ENCODE measurements at regions of chr19 and their contacts with region 1.

Region 1: DNA sequence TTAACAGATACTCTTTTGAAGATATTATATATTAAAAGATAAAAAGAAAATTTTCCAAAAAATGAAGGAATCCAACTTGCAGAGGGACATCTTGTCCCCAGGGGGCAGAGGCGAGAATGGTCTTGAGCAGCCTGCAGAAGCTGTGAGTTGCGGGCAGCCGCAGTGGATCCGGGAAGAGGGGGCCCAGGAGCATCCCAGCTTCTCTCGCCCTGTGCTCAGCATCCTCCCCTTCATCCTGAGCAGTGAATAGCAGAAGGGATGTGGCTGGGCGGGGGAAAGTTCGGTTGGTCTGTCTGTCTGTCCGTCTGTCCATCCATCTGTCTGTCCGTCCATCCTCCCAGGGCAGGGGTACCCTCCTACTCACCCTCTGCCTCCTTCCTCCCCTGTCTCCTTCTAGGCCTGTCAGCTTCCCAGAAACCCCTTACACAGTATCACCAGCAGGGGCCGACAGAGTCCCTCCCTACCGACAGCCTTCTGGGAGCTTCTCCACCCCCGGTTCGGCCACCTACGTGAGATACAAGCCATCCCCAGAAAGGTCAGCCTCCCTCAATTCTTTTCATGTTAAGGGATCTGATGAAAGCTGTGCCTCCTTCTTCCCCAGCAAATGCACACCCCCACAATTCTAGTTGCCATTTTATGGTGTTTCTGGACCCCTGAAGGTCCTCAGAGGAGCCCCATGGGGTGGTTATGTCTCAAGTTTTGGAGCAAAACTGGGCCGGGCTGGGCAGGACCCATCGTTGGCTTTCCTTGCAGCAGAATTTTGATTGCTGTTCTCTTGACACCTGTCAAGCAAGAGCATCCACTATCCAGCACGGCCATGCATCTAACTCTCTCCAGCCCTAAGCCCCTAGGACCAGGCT is 81.6 kb downstream of the DPF1 start:
- DNase-seq: peak; percentile 37
- H3K4me3 ChIP-seq: no peak overlapping the region
- H3K27ac ChIP-seq: no peak overlapping the region
- H3K4me1 ChIP-seq: no peaks in the 10 kb centered on the region
- H3K27me3 ChIP-seq: no peaks in the 10 kb centered on the region
- CTCF ChIP-seq: peak; percentile 81 to 84
- POLR2A ChIP-seq: no peak

Region 2: GRCh38 chr19:38122402-38123093 is 19.9 kb before region 1 on chr19:
- CTCF ChIA-PET with region 1: interaction called, 13 read pairs
- POLR2A ChIA-PET with region 1: no interaction called
- dilution Hi-C with region 1: no loop called
- intact Hi-C with region 1: no loop called
- DNase-seq: no peak
- H3K4me3 ChIP-seq: no peak overlapping the region
- H3K27ac ChIP-seq: no peak overlapping the region
- H3K4me1 ChIP-seq: no peaks in the 10 kb centered on the region
- H3K27me3 ChIP-seq: no peaks in the 10 kb centered on the region
- CTCF ChIP-seq: no peak
- POLR2A ChIP-seq: no peak

Region 3: DNA sequence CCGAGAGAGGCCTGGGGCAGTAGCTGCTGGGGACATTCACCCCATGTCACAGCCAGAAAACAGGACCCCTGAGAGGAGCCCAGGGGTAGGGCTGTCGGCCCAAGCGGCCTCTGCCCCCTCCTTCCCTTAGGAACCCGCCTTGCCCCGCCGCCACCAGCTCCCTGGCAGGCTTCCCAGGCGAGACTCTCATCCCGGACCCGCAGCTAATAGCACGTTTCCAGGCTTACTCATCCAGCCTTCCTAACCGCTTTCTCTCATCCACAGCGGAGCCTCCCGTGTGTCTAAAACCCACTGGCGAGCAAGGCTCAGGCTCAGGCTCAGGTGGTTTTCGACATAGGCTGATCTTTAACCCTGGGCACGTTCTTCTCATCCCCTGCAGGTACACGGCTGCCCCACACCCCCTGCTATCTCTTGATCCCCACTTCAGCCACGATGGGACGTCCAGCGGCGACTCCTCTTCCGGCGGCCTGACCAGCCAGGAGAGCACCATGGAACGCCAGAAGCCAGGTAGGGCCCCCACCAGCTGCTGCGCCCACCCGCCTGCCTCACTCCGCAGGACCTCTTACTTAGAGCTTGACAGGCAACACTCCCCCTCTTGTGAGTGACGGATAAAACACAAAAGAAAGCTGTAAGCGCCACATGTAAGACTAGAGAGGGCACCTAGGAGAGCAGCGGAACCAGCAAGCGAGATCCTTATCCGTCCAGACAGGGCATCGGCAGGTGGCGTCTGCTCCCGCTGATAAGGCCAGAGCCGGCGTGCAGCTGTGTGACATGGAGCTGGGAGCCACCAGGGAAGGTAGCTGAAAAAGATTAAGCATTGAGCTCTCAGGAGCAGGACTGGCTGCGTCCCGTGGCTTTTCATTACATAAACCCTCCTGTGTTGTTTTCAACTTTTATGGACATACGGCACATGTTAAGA is 10.3 kb after region 1 on chr19:
- CTCF ChIA-PET with region 1: interaction called, 15 read pairs
- POLR2A ChIA-PET with region 1: interaction called, 4 read pairs
- dilution Hi-C with region 1: no loop called
- intact Hi-C with region 1: no loop called
- DNase-seq: no peak
- H3K4me3 ChIP-seq: no peak overlapping the region
- H3K27ac ChIP-seq: no peak overlapping the region
- H3K4me1 ChIP-seq: no peaks in the 10 kb centered on the region
- H3K27me3 ChIP-seq: no peaks in the 10 kb centered on the region
- CTCF ChIP-seq: no peak
- POLR2A ChIP-seq: no peak

Region 4: DNA sequence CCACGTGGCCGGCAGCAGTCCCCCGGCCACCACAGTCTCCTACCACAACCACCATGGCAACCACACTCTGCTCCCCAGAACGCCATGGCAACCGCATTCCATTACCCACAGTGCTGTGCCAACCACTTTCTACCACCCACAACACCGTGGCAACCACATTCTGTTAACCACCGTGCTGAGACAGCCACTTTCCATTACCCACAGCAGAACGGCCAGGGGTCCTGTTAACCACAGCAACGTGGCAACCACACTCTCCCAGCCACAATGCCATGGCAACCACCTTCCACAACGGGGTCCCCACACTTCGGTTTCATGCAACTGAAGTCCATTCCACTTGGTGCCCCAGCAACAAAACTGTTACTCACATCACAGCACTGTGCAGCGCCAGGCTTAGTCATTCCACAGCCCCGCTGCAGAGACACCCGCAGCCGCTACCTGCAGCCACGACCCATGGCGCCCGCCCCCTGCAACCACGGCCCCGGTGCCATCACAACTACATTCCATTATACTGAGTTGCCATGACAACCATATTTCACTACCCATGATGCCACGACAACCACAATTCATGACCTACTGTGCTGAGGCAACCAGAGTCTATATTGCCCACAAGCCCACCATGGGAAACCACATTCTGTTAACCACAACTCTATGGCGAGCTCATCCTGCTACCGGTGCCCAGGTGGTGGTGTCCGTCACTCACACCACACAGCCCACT is 71.7 kb after region 1 on chr19:
- CTCF ChIA-PET with region 1: interaction called, 7 read pairs
- POLR2A ChIA-PET with region 1: no interaction called
- dilution Hi-C with region 1: no loop called
- intact Hi-C with region 1: loop called (anchors 5 kb)
- DNase-seq: no peak
- H3K4me3 ChIP-seq: no peak overlapping the region
- H3K27ac ChIP-seq: no peak overlapping the region
- H3K4me1 ChIP-seq: peaks cover 11% of the 10 kb centered on the region
- H3K27me3 ChIP-seq: peaks cover 11 to 21% of the 10 kb centered on the region in 2 experiments
- CTCF ChIP-seq: no peak
- POLR2A ChIP-seq: no peak

Region 5: GRCh38 chr19:38224014-38224862 is 81.8 kb after region 1 on chr19 and contains the start of gene DPF1:
- CTCF ChIA-PET with region 1: interaction called, 20 read pairs
- POLR2A ChIA-PET with region 1: no interaction called
- dilution Hi-C with region 1: no loop called
- intact Hi-C with region 1: no loop called
- DNase-seq: peak; percentile 61
- H3K4me3 ChIP-seq: peak within 1 kb of the TSS; percentile 6 to 60 (median 31)
- H3K27ac ChIP-seq: no peak within 1 kb of the TSS
- H3K4me1 ChIP-seq: peaks cover 12% of the 10 kb centered on the region
- H3K27me3 ChIP-seq: peaks cover 2 to 8% of the 10 kb centered on the region in 2 experiments
- CTCF ChIP-seq: peak in 1 of 2 donors; percentile 6
- POLR2A ChIP-seq: no peak
- total RNA-seq, gene DPF1: 3.9 and 5.0 TPM in 2 replicates